ENCODE measurements at regions of chr1 and their contacts with region 1.

Region 1: GRCh38 chr1:109838838-109839240 is 71.8 kb upstream of the CSF1 start:
- DNase-seq: no peak
- H3K4me3 ChIP-seq: no peak overlapping the region
- H3K27ac ChIP-seq: no peak overlapping the region
- H3K4me1 ChIP-seq: no peaks in the 10 kb centered on the region
- H3K27me3 ChIP-seq: no peaks in the 10 kb centered on the region
- CTCF ChIP-seq: no peak

Region 2: DNA sequence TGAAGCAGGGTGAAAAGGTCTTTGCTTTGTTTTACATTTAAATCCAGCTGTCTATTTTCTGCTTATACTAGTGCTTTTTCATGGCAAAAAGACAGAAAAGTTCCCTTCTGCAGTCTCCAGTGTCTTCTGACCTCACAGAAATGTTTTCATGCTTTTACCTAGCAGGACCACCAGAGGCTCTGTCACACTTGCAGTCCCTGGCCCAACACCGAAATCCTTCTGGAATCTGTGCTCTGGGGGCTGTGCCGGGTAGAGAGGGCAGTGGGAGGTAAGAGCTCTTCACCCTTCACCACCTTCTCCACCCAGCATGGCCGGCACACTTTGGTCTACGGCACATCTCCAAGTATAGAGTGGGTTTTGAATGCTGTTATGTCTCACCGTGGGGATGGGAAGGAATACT is 240.2 kb before region 1 on chr1:
- intact Hi-C with region 1: no loop called
- DNase-seq: peak in 3 of 5 donors; percentile 24 to 72 (median 51)
- H3K4me3 ChIP-seq: no peak overlapping the region
- H3K27ac ChIP-seq: no peak overlapping the region
- H3K4me1 ChIP-seq: peaks cover 0 to 5% (median 0%) of the 10 kb centered on the region in 3 donors
- H3K27me3 ChIP-seq: no peaks in the 10 kb centered on the region
- CTCF ChIP-seq: no peak

Region 3: GRCh38 chr1:109873278-109874175 is 34.7 kb after region 1 on chr1:
- intact Hi-C with region 1: loop called (anchors 5 kb)
- DNase-seq: no peak
- H3K4me3 ChIP-seq: no peak overlapping the region
- H3K27ac ChIP-seq: no peak overlapping the region
- H3K4me1 ChIP-seq: peaks cover 0 to 20% (median 15%) of the 10 kb centered on the region in 3 donors
- H3K27me3 ChIP-seq: no peaks in the 10 kb centered on the region
- CTCF ChIP-seq: no peak

Region 4: DNA sequence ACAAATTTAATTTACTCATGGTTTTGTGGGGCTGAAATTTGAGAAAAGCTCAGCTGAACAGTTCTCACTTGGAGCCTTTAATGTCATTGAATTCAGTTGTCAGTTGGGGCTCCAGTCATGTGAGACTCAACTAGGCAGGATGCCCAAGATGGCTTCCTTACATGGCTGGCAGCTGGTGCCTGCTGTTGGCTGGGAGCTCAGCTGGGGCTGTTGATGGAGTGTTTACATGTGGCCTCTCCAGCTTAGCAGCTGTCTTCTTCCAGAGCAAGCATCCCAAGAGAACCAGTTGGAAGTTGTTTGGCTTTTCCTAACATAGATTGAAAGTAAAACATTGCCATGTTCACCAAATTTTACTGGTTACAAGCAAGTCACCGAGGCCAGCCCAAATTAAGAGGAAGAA is 917.7 kb after region 1 on chr1:
- intact Hi-C with region 1: no loop called
- DNase-seq: no peak
- H3K4me3 ChIP-seq: no peak overlapping the region
- H3K27ac ChIP-seq: no peak overlapping the region
- H3K4me1 ChIP-seq: no peaks in the 10 kb centered on the region
- H3K27me3 ChIP-seq: no peaks in the 10 kb centered on the region
- CTCF ChIP-seq: no peak